GM12878 (cell line): ENCODE measurements at regions of chr18 and their contacts with region 1.

Region 1: DNA sequence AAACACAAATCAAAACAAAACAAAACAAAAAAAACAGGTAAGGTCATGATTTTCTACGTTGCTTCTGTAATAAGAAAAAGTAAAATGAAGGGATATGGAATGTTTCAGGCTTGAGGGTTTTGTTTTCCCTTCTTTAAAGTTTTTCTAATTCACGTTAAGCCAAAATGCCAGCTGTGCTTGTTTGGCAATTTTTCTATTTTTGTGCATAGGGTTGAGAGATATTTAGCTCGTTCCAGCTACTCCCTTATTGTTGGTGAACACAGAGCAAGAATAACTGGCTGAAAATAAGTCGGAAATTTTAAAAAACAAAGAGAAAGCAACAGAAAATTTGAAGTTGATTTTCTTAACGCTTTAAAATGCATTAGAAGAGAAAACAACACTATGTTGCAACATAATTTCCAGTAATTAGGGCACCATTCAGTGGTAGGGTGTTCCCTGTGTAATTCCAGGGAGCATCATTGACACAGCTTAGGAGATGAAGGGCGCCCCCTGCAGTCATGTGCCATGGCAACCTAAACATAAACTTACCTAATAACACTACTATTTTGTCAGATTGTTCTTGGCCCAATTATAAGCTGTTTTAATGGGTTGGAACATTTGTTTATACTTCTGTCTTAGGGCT is 99.5 kb downstream of the DTNA start:
- DNase-seq: no peak
- ATAC-seq: no peak
- H3K4me3 ChIP-seq: no peak overlapping the region
- H3K27ac ChIP-seq: no peak overlapping the region
- H3K4me1 ChIP-seq: no peaks in the 10 kb centered on the region
- H3K27me3 ChIP-seq: no peaks in the 10 kb centered on the region
- CTCF ChIP-seq: peak in 1 of 3 experiments; percentile 14; a peak in 1 of 6 replicates
- EP300 ChIP-seq: no peak
- POLR2A ChIP-seq: no peak
- RAD21 ChIP-seq: no peak

Region 2: GRCh38 chr18:33863912-33864311 is 945.6 kb before region 1 on chr18:
- CTCF ChIA-PET with region 1: no interaction called
- POLR2A ChIA-PET with region 1: no interaction called
- RAD21 ChIA-PET with region 1: no interaction called
- SMC1A ChIA-PET with region 1: no interaction called
- in situ Hi-C with region 1: no loop called
- intact Hi-C with region 1: no loop called
- DNase-seq: no peak
- ATAC-seq: no peak
- H3K4me3 ChIP-seq: no peak overlapping the region
- H3K27ac ChIP-seq: no peak overlapping the region
- H3K4me1 ChIP-seq: no peaks in the 10 kb centered on the region
- H3K27me3 ChIP-seq: no peaks in the 10 kb centered on the region
- CTCF ChIP-seq: no peak
- EP300 ChIP-seq: no peak
- POLR2A ChIP-seq: no peak
- RAD21 ChIP-seq: no peak

Region 3: GRCh38 chr18:34821749-34822148 is 12.2 kb after region 1 on chr18:
- CTCF ChIA-PET with region 1: interaction called, 11 read pairs
- POLR2A ChIA-PET with region 1: no interaction called
- RAD21 ChIA-PET with region 1: no interaction called
- SMC1A ChIA-PET with region 1: interaction called, 5 read pairs
- in situ Hi-C with region 1: no loop called
- intact Hi-C with region 1: no loop called
- DNase-seq: no peak
- ATAC-seq: peak; percentile 44; the same call in 1 of the 3 replicates
- H3K4me3 ChIP-seq: no peak overlapping the region
- H3K27ac ChIP-seq: no peak overlapping the region
- H3K4me1 ChIP-seq: no peaks in the 10 kb centered on the region
- H3K27me3 ChIP-seq: no peaks in the 10 kb centered on the region; a peak in 1 of 4 replicates
- CTCF ChIP-seq: no peak
- EP300 ChIP-seq: no peak
- POLR2A ChIP-seq: no peak
- RAD21 ChIP-seq: no peak

Region 4: GRCh38 chr18:35756506-35757117 is 947.0 kb after region 1 on chr18:
- CTCF ChIA-PET with region 1: no interaction called
- POLR2A ChIA-PET with region 1: no interaction called
- RAD21 ChIA-PET with region 1: no interaction called
- SMC1A ChIA-PET with region 1: no interaction called
- in situ Hi-C with region 1: no loop called
- intact Hi-C with region 1: no loop called
- DNase-seq: no peak
- ATAC-seq: peak; percentile 93
- H3K4me3 ChIP-seq: no peak overlapping the region
- H3K27ac ChIP-seq: no peak overlapping the region
- H3K4me1 ChIP-seq: no peaks in the 10 kb centered on the region
- H3K27me3 ChIP-seq: peaks cover 0 to 2% of the 10 kb centered on the region in 2 experiments; a peak in 2 of 4 replicates
- CTCF ChIP-seq: peak; percentile 51 to 84 (median 53); a peak in 5 of 6 replicates
- EP300 ChIP-seq: no peak
- POLR2A ChIP-seq: no peak
- RAD21 ChIP-seq: peak; percentile 92